ENCODE measurements at regions of chr3 and their contacts with region 1.

Region 1: GRCh38 chr3:56593455-56594158 is 36.6 kb downstream of the CCDC66 start:
- DNase-seq: peak in 7 of 9 donors; percentile 67 to 86 (median 79)
- ATAC-seq: peak; percentile 99
- H3K4me3 ChIP-seq: peak overlapping the region; percentile 17
- H3K4me3 Mint-ChIP-seq: peak overlapping the region; percentile 45 to 85 (median 76)
- H3K27ac ChIP-seq: peak overlapping the region; percentile 63
- H3K27ac Mint-ChIP-seq: peak overlapping the region; percentile 87 to 98 (median 95)
- H3K4me1 ChIP-seq: peaks cover 23 to 56% of the 10 kb centered on the region in 2 donors
- H3K4me1 Mint-ChIP-seq: peaks cover 26 to 87% (median 75%) of the 10 kb centered on the region in 7 donors
- H3K27me3 ChIP-seq: no peaks in the 10 kb centered on the region
- H3K27me3 Mint-ChIP-seq: no peaks in the 10 kb centered on the region

Region 2: DNA sequence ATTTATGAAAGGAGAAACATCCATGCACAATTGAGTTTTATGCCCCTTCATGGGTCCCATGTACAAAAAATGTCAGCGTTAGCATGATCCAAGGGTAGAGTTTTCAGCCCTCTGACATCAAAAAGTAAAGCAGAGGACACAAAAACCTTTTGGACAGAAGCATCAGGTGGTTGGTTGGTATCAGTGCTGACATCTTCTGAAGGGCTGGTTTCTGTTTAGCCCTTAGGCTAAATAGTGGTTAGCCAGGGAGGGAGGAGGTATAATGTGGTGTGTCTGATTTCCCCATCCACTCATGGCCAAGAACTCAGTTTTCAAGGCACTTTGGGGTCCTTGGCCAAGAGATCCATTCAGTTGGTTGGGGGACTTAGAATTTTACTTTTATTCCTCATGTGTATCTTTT is 20.1 kb before region 1 on chr3:
- CTCF ChIA-PET with region 1: no interaction called
- POLR2A ChIA-PET with region 1: interaction called, 5 read pairs
- intact Hi-C with region 1: loop called in 1 of 2 experiments (anchors 2 kb)
- DNase-seq: no peak
- ATAC-seq: no peak
- H3K4me3 ChIP-seq: no peak overlapping the region
- H3K4me3 Mint-ChIP-seq: no peak overlapping the region
- H3K27ac ChIP-seq: no peak overlapping the region
- H3K27ac Mint-ChIP-seq: no peak overlapping the region
- H3K4me1 ChIP-seq: no peaks in the 10 kb centered on the region
- H3K4me1 Mint-ChIP-seq: peaks cover 14 to 41% (median 29%) of the 10 kb centered on the region in 7 donors
- H3K27me3 ChIP-seq: no peaks in the 10 kb centered on the region
- H3K27me3 Mint-ChIP-seq: no peaks in the 10 kb centered on the region

Region 3: DNA sequence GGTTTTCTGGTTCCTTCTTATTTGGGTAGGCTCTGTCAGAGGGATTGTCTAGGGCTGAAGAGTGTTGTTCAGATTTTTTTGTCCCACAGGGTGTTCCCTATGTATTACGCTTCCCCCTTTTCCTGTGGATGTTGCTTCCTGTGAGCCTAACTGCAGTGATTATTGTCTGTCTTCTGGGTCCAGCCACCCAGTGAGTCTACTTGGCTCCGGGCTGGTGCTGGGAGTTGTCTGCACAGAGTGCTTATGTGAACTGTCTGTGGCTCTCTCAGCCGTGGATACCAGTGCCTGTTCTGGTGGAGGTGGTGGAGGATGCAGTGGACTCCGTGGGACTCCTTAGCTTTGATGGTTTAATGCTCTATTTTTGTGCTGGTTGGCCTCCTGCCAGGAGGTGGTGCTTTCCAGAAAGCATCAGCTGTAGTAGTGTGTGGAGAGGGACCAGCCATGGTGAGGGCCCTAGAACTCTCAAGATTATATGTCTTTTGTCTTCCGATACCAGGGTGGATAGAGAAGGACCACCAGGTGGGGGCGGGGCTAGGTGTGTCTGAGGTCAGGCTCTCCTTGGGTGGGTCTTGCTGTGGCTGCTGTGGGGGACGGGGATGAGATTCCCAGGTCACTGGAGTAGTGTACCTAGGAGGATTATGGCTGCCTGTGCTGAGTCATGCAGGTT is 17.2 kb after region 1 on chr3:
- CTCF ChIA-PET with region 1: interaction called, 3 read pairs
- POLR2A ChIA-PET with region 1: interaction called, 6 read pairs
- intact Hi-C with region 1: loop called (anchors 1 to 2 kb)
- DNase-seq: no peak
- ATAC-seq: no peak
- H3K4me3 ChIP-seq: no peak overlapping the region
- H3K4me3 Mint-ChIP-seq: peak overlapping the region in 7 of 10 donors; percentile 5 to 77 (median 45)
- H3K27ac ChIP-seq: no peak overlapping the region
- H3K27ac Mint-ChIP-seq: peak overlapping the region in 8 of 9 donors; percentile 20 to 94 (median 62)
- H3K4me1 ChIP-seq: peaks cover 29 to 52% of the 10 kb centered on the region in 2 donors
- H3K4me1 Mint-ChIP-seq: peaks cover 46 to 82% (median 78%) of the 10 kb centered on the region in 7 donors
- H3K27me3 ChIP-seq: no peaks in the 10 kb centered on the region
- H3K27me3 Mint-ChIP-seq: no peaks in the 10 kb centered on the region

Region 4: DNA sequence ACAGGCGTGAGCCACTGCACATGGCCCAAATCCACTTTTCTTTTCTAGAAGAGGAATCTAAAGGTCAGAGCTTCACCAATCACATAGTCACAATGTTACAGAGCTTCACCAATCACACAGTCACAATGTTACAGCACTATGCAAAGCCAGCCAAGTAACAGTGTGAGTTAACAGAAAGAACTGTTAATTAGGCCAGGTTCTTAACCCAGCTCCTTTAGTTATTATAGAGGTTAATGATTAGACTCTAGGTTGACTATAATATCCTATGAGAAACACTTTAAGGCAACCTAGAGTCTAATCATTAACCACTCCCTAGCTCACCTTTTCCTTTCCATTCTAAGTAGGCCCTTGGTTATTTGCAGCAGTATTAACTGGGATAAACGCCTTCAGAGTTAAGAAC is 35.4 kb after region 1 on chr3:
- CTCF ChIA-PET with region 1: no interaction called
- POLR2A ChIA-PET with region 1: interaction called, 3 read pairs
- intact Hi-C with region 1: loop called in 1 of 2 experiments (anchors 5 kb)
- DNase-seq: no peak
- ATAC-seq: no peak
- H3K4me3 ChIP-seq: no peak overlapping the region
- H3K4me3 Mint-ChIP-seq: no peak overlapping the region
- H3K27ac ChIP-seq: no peak overlapping the region
- H3K27ac Mint-ChIP-seq: peak overlapping the region in 8 of 9 donors; percentile 65 to 87 (median 72)
- H3K4me1 ChIP-seq: no peaks in the 10 kb centered on the region
- H3K4me1 Mint-ChIP-seq: peaks cover 0 to 22% (median 4%) of the 10 kb centered on the region in 7 donors
- H3K27me3 ChIP-seq: no peaks in the 10 kb centered on the region
- H3K27me3 Mint-ChIP-seq: no peaks in the 10 kb centered on the region

Region 5: DNA sequence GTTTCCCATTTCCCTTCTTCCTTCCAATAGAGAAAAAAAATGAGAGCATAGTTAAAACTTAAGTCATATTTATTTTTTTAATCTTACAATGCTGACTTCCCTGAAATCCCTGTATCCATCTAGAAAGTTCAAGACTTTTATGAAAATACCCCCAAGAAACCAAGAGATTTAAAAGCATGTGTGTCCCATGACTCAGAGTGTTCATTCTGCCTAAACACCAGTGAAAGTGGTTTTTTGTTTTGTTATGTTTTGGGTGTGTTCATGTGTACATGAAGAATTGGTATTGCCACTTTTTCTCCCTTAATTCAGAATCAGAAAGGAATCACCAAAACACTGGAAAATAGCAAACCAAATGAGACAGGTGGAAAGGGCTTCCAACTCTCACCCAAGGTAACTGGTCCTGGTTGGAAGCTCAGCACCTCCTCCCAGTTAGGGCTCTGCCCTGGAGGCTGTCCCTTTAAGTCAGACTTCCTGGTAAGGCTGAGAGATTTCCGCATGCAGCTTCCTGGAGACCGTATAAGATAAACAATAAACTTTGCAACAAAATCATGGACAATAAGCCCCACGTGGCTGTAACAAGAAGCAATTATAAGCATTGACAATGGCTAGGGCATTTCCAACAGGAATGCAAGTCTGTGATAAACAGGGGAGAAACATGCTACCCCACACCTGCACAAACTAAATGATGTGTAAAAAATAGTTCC is 330.1 kb after region 1 on chr3:
- CTCF ChIA-PET with region 1: no interaction called
- POLR2A ChIA-PET with region 1: no interaction called
- intact Hi-C with region 1: loop called in 1 of 2 experiments (anchors 10 kb)
- DNase-seq: peak; percentile 21 to 85 (median 78)
- ATAC-seq: peak; percentile 89
- H3K4me3 ChIP-seq: peak overlapping the region; percentile 10
- H3K4me3 Mint-ChIP-seq: peak overlapping the region; percentile 52 to 82 (median 76)
- H3K27ac ChIP-seq: peak overlapping the region; percentile 82
- H3K27ac Mint-ChIP-seq: peak overlapping the region; percentile 86 to 100 (median 99)
- H3K4me1 ChIP-seq: peaks cover 61 to 77% of the 10 kb centered on the region in 2 donors
- H3K4me1 Mint-ChIP-seq: peaks cover 50 to 93% (median 84%) of the 10 kb centered on the region in 7 donors
- H3K27me3 ChIP-seq: no peaks in the 10 kb centered on the region
- H3K27me3 Mint-ChIP-seq: no peaks in the 10 kb centered on the region

Region 6: DNA sequence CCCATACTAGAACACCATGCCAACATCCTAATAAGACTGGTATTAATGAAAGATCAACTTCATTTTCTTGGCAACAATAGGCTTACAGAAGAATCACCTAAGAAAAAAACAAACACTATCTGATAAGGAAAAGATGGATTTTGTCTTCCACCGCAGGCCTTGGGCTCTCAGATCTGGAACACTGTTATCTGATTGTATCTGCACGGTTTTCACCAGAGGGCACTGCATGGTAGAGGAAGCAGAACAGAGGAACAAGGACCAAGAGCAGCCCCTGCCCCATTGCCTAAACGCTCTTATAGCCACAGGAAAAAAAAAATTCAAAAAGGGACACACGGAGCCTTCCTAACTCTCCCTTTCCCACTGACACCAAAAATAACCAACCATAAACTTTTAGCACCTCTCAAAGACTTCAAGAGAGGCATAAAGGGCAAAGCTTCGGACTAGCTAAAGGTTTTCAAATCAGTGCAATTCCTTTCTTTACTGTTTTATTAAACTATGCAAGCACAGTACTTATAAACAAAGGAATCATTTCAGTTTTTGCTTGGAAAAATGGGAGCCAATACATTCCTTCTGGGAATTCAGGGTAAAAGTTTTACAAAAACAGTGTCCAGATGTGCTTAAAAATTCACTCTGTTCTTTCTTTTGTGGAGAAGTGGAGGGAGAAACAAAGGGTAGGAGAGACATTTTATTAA is 548.3 kb after region 1 on chr3:
- CTCF ChIA-PET with region 1: no interaction called
- POLR2A ChIA-PET with region 1: no interaction called
- intact Hi-C with region 1: no loop called
- DNase-seq: no peak
- ATAC-seq: no peak
- H3K4me3 ChIP-seq: no peak overlapping the region
- H3K4me3 Mint-ChIP-seq: no peak overlapping the region
- H3K27ac ChIP-seq: no peak overlapping the region
- H3K27ac Mint-ChIP-seq: no peak overlapping the region
- H3K4me1 ChIP-seq: no peaks in the 10 kb centered on the region
- H3K4me1 Mint-ChIP-seq: no peaks in the 10 kb centered on the region
- H3K27me3 ChIP-seq: no peaks in the 10 kb centered on the region
- H3K27me3 Mint-ChIP-seq: peaks cover 14 to 60% (median 26%) of the 10 kb centered on the region in 5 donors

Measured in naive thymus-derived CD4-positive, alpha-beta T cell (primary cell).